Heart left ventricle (tissue), 16 donors: ENCODE measurements at regions of chr11 and their contacts with region 1.

Region 1: GRCh38 chr11:70699294-70700221 is 301.2 kb downstream of the CTTN start:
- DNase-seq: no peak
- ATAC-seq: no peak
- H3K4me3 ChIP-seq: no peak overlapping the region
- H3K27ac ChIP-seq: no peak overlapping the region
- H3K4me1 ChIP-seq: no peaks in the 10 kb centered on the region
- H3K27me3 ChIP-seq: peaks cover 0 to 17% (median 0%) of the 10 kb centered on the region in 9 donors
- CTCF ChIP-seq: no peak
- POLR2A ChIP-seq: no peak

Region 2: GRCh38 chr11:70641369-70641768 is 58.2 kb before region 1 on chr11:
- intact Hi-C with region 1: loop called in 1 of 10 experiments (anchors 10 kb)
- DNase-seq: no peak
- ATAC-seq: no peak
- H3K4me3 ChIP-seq: no peak overlapping the region
- H3K27ac ChIP-seq: no peak overlapping the region
- H3K4me1 ChIP-seq: no peaks in the 10 kb centered on the region
- H3K27me3 ChIP-seq: peaks cover 0 to 25% (median 4%) of the 10 kb centered on the region in 9 donors
- CTCF ChIP-seq: no peak
- POLR2A ChIP-seq: no peak